ENCODE measurements at regions of chr21 and their contacts with region 1.

Region 1: DNA sequence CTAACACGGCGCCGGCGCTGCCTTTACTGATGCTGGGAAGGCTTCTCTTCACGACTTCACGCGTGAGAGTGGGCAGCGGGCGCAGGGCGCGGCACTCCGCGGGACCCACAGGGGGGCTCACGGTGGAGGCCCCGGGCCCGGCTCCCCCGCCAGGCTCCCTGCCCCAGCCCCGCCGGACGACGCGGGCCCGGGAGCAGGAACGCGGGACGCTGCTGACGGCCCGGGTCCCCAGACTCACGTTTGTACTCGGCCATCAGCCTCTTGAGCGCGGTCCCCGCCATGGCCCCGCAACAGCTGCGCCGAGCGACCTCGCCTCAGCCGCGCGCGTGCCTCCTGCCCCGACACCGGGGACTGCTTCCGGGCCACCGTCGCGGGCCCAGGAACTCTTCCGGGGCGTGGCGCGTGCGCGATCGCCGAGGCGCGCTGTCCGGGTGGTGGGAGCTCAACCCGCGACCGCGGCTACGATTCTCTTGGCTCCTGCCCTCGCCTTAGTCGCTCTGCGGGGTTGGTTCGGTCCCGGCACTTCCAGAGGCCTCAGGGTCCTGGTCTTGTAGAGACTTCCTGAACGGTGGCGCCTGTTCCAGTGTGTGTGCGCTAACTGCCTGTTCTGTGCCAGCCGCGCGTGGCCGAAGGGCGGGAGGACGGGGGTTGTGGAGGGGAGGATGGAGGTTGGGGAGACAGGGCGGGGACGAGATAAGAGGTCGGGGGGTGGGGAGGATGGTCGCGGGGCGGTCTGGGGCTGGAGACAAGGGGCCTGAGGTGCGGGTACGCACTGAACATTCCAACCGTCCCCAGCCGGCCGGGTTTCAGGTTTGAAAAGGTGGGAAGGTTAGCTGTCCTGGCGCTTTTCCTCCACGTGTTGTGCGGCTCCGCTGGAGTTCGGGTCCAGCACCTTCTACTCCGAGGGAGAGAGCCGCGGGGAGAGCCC is at the start of gene UBE2G2:
- DNase-seq: peak; percentile 97

Region 2: GRCh38 chr21:44817506-44817880 is 15.8 kb after region 1 on chr21:
- CTCF ChIA-PET with region 1: interaction called, 6 read pairs
- POLR2A ChIA-PET with region 1: interaction called, 11 read pairs
- DNase-seq: peak; percentile 99

Region 3: GRCh38 chr21:44858778-44859177 is 57.0 kb after region 1 on chr21:
- CTCF ChIA-PET with region 1: no interaction called
- POLR2A ChIA-PET with region 1: no interaction called
- DNase-seq: no peak

Region 4: GRCh38 chr21:44873356-44874239 is 71.9 kb after region 1 on chr21 and contains the start of gene PTTG1IP:
- CTCF ChIA-PET with region 1: no interaction called
- POLR2A ChIA-PET with region 1: interaction called, 29 read pairs
- DNase-seq: peak; percentile 100

Measured in HEK293T (cell line).